Endothelial cell of umbilical vein (primary cell): ENCODE measurements at regions of chr5 and their contacts with region 1.

Region 1: GRCh38 chr5:140362860-140363630 is 3.1 kb downstream of the SLC4A9 start:
- DNase-seq: peak; percentile 61
- H3K4me3 ChIP-seq: peak overlapping the region in 2 of 3 experiments; percentile 20 to 24
- H3K27ac ChIP-seq: no peak overlapping the region
- H3K4me1 ChIP-seq: peaks cover 3% of the 10 kb centered on the region
- H3K27me3 ChIP-seq: no peaks in the 10 kb centered on the region
- CTCF ChIP-seq: peak; percentile 97 to 98
- POLR2A ChIP-seq: no peak

Region 2: GRCh38 chr5:140381972-140382371 is 18.9 kb after region 1 on chr5:
- CTCF ChIA-PET with region 1: interaction called, 11 read pairs
- POLR2A ChIA-PET with region 1: no interaction called
- dilution Hi-C with region 1: no loop called
- intact Hi-C with region 1: no loop called
- DNase-seq: no peak
- H3K4me3 ChIP-seq: no peak overlapping the region
- H3K27ac ChIP-seq: no peak overlapping the region
- H3K4me1 ChIP-seq: peaks cover 12% of the 10 kb centered on the region
- H3K27me3 ChIP-seq: no peaks in the 10 kb centered on the region
- CTCF ChIP-seq: no peak
- POLR2A ChIP-seq: no peak

Region 3: DNA sequence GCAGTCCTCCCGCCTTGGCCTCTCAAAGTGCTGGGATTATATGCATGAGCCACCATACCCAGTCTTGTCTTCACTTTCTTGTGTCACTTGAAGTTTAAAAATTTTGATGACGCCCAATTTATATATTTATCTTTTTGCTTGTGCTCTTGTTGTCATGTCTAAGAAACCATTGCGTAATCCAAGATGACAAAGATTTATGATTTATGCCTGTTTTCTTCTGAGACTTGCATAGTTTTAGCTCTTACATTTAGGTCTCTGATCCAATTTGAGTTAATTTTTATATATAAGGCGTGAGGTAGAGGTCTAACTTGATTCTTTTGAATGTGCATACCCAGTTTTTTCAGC is 57.2 kb after region 1 on chr5:
- CTCF ChIA-PET with region 1: no interaction called
- POLR2A ChIA-PET with region 1: no interaction called
- dilution Hi-C with region 1: no loop called
- intact Hi-C with region 1: no loop called
- DNase-seq: no peak
- H3K4me3 ChIP-seq: no peak overlapping the region
- H3K27ac ChIP-seq: no peak overlapping the region
- H3K4me1 ChIP-seq: no peaks in the 10 kb centered on the region
- H3K27me3 ChIP-seq: no peaks in the 10 kb centered on the region
- CTCF ChIP-seq: no peak
- POLR2A ChIP-seq: no peak